CD4-positive, alpha-beta T cell (primary cell): ENCODE measurements at regions of chr1 and their contacts with region 1.

Region 1: GRCh38 chr1:147242439-147243227 is at the start of gene CHD1L:
- DNase-seq: peak; percentile 85 to 97 (median 92)
- ATAC-seq: peak; percentile 91
- H3K4me3 ChIP-seq: peak within 1 kb of the TSS; percentile 62
- H3K4me3 Mint-ChIP-seq: peak within 1 kb of the TSS; percentile 96
- H3K27ac ChIP-seq: peak within 1 kb of the TSS in 1 of 2 donors; percentile 72
- H3K27ac Mint-ChIP-seq: peak within 1 kb of the TSS; percentile 56
- H3K4me1 ChIP-seq: peaks cover 18% of the 10 kb centered on the region
- H3K4me1 Mint-ChIP-seq: peaks cover 49% of the 10 kb centered on the region
- H3K27me3 ChIP-seq: no peaks in the 10 kb centered on the region
- H3K27me3 Mint-ChIP-seq: no peaks in the 10 kb centered on the region
- CTCF ChIP-seq: peak; percentile 78
- total RNA-seq, gene CHD1L: 22.0 to 22.8 TPM

Region 2: GRCh38 chr1:147084273-147085096 is 158.1 kb before region 1 on chr1:
- CTCF ChIA-PET with region 1: no interaction called
- POLR2A ChIA-PET with region 1: interaction called, 10 read pairs
- intact Hi-C with region 1: loop called in 1 of 2 experiments (anchors 5 kb)
- DNase-seq: peak; percentile 26 to 84 (median 49)
- ATAC-seq: peak; percentile 78
- H3K4me3 ChIP-seq: peak overlapping the region; percentile 72
- H3K4me3 Mint-ChIP-seq: peak overlapping the region; percentile 93
- H3K27ac ChIP-seq: peak overlapping the region; percentile 30 to 81
- H3K27ac Mint-ChIP-seq: peak overlapping the region; percentile 97
- H3K4me1 ChIP-seq: peaks cover 32% of the 10 kb centered on the region
- H3K4me1 Mint-ChIP-seq: peaks cover 41% of the 10 kb centered on the region
- H3K27me3 ChIP-seq: peaks cover 19 to 23% of the 10 kb centered on the region in 2 experiments
- H3K27me3 Mint-ChIP-seq: peaks cover 58% of the 10 kb centered on the region
- CTCF ChIP-seq: no peak

Region 3: DNA sequence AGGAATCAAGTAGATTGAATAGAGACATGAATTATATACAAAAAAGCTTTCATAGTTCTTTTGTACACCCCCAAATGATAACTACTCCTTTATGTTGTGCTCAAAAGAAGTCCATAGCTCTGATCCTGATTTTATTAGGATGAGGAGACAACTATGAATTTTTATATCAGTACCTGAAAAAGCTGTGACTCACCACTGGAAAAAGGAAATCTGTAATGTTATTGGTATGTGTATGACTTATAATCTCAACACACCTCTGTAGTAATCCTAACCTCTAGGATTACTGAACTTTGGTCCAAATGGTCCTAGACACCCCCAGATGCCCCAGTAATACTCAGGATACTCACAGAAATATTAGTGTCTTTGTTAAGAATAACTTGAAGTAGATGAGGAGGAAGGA is 80.5 kb before region 1 on chr1:
- CTCF ChIA-PET with region 1: interaction called, 10 read pairs
- POLR2A ChIA-PET with region 1: interaction called, 3 read pairs
- intact Hi-C with region 1: no loop called
- DNase-seq: no peak
- ATAC-seq: no peak
- H3K4me3 ChIP-seq: no peak overlapping the region
- H3K4me3 Mint-ChIP-seq: no peak overlapping the region
- H3K27ac ChIP-seq: no peak overlapping the region
- H3K27ac Mint-ChIP-seq: no peak overlapping the region
- H3K4me1 ChIP-seq: no peaks in the 10 kb centered on the region
- H3K4me1 Mint-ChIP-seq: no peaks in the 10 kb centered on the region
- H3K27me3 ChIP-seq: no peaks in the 10 kb centered on the region
- H3K27me3 Mint-ChIP-seq: no peaks in the 10 kb centered on the region
- CTCF ChIP-seq: no peak

Region 4: GRCh38 chr1:147172168-147172992 is 70.3 kb before region 1 on chr1 and contains the start of gene PRKAB2:
- CTCF ChIA-PET with region 1: interaction called, 33 read pairs
- POLR2A ChIA-PET with region 1: interaction called, 49 read pairs
- intact Hi-C with region 1: loop called (anchors 1 kb)
- DNase-seq: peak; percentile 73 to 95 (median 86)
- ATAC-seq: peak; percentile 77
- H3K4me3 ChIP-seq: peak within 1 kb of the TSS; percentile 89
- H3K4me3 Mint-ChIP-seq: peak within 1 kb of the TSS; percentile 99
- H3K27ac ChIP-seq: peak within 1 kb of the TSS; percentile 57 to 82
- H3K27ac Mint-ChIP-seq: peak within 1 kb of the TSS; percentile 92
- H3K4me1 ChIP-seq: peaks cover 25% of the 10 kb centered on the region
- H3K4me1 Mint-ChIP-seq: peaks cover 54% of the 10 kb centered on the region
- H3K27me3 ChIP-seq: no peaks in the 10 kb centered on the region
- H3K27me3 Mint-ChIP-seq: no peaks in the 10 kb centered on the region
- CTCF ChIP-seq: peak; percentile 90
- total RNA-seq, gene PRKAB2: 7.4 to 9.6 TPM

Region 5: GRCh38 chr1:147177611-147178380 is 64.8 kb before region 1 on chr1:
- CTCF ChIA-PET with region 1: interaction called, 33 read pairs
- POLR2A ChIA-PET with region 1: interaction called, 49 read pairs
- intact Hi-C with region 1: loop called (anchors 1 kb)
- DNase-seq: peak in 1 of 14 experiments; percentile 10
- ATAC-seq: no peak
- H3K4me3 ChIP-seq: no peak overlapping the region
- H3K4me3 Mint-ChIP-seq: no peak overlapping the region
- H3K27ac ChIP-seq: no peak overlapping the region
- H3K27ac Mint-ChIP-seq: no peak overlapping the region
- H3K4me1 ChIP-seq: peaks cover 7% of the 10 kb centered on the region
- H3K4me1 Mint-ChIP-seq: peaks cover 15% of the 10 kb centered on the region
- H3K27me3 ChIP-seq: no peaks in the 10 kb centered on the region
- H3K27me3 Mint-ChIP-seq: no peaks in the 10 kb centered on the region
- CTCF ChIP-seq: no peak

Region 6: GRCh38 chr1:147225193-147225730 is 17.4 kb before region 1 on chr1 and contains the start of gene FMO5:
- CTCF ChIA-PET with region 1: interaction called, 26 read pairs
- POLR2A ChIA-PET with region 1: interaction called, 6 read pairs
- intact Hi-C with region 1: no loop called
- DNase-seq: peak; percentile 14 to 77 (median 36)
- ATAC-seq: peak; percentile 98
- H3K4me3 ChIP-seq: peak within 1 kb of the TSS; percentile 68
- H3K4me3 Mint-ChIP-seq: peak within 1 kb of the TSS; percentile 89
- H3K27ac ChIP-seq: peak within 1 kb of the TSS in 1 of 2 donors; percentile 1
- H3K27ac Mint-ChIP-seq: peak within 1 kb of the TSS; percentile 47
- H3K4me1 ChIP-seq: peaks cover 9% of the 10 kb centered on the region
- H3K4me1 Mint-ChIP-seq: peaks cover 20% of the 10 kb centered on the region
- H3K27me3 ChIP-seq: no peaks in the 10 kb centered on the region
- H3K27me3 Mint-ChIP-seq: no peaks in the 10 kb centered on the region
- CTCF ChIP-seq: no peak
- total RNA-seq, gene FMO5: 0.41 to 0.67 TPM